ENCODE measurements at regions of chr7 and their contacts with region 1.

Region 1: DNA sequence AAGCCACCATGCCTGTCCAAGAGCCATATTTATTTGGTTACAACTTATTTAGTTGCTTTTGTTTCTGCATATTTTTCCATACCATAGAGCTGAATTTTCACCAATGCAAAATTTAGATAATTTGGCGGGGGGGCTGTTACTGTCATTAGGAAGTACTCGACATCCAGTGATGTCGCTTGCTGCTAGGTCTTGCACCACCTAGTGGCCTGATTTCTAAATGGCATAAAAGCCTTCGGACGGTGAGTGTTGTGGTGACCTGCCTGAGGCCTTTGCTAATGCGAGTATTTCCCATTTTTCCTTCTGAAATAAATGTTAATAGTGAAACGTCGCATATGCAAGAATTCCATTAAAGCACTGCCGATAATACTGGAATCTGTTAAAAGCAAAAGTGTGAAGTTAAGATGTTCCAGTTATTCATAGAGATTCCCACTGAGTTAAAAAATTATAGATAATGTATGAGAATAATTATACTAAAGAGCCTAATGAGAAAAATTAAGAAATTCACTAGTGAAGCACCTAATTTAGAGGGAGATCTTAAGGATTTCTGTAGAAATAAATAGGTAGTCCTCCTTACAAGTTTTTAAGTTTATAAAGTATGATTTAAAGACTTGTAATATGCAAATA is 86.1 kb upstream of the DNAJB6 start:
- DNase-seq: peak; percentile 40 to 55 (median 43)
- H3K4me3 ChIP-seq: no peak overlapping the region
- H3K4me3 Mint-ChIP-seq: no peak overlapping the region
- H3K27ac ChIP-seq: no peak overlapping the region
- H3K27ac Mint-ChIP-seq: peak overlapping the region in 4 of 7 donors; percentile 37 to 63 (median 56)
- H3K4me1 ChIP-seq: no peaks in the 10 kb centered on the region
- H3K4me1 Mint-ChIP-seq: peaks cover 0 to 3% (median 1%) of the 10 kb centered on the region in 4 donors
- H3K27me3 ChIP-seq: no peaks in the 10 kb centered on the region
- H3K27me3 Mint-ChIP-seq: no peaks in the 10 kb centered on the region

Region 2: GRCh38 chr7:156949541-156950380 is 301.0 kb before region 1 on chr7 and contains the start of gene NOM1:
- CTCF ChIA-PET with region 1: interaction called, 3 read pairs
- POLR2A ChIA-PET with region 1: no interaction called
- intact Hi-C with region 1: loop called (anchors 2 kb)
- DNase-seq: peak; percentile 85 to 91 (median 89)
- H3K4me3 ChIP-seq: peak within 1 kb of the TSS; percentile 85 to 94
- H3K4me3 Mint-ChIP-seq: peak within 1 kb of the TSS; percentile 94 to 97 (median 96)
- H3K27ac ChIP-seq: peak within 1 kb of the TSS; percentile 62
- H3K27ac Mint-ChIP-seq: peak within 1 kb of the TSS; percentile 82 to 97 (median 88)
- H3K4me1 ChIP-seq: peaks cover 32% of the 10 kb centered on the region
- H3K4me1 Mint-ChIP-seq: peaks cover 17 to 28% (median 25%) of the 10 kb centered on the region in 4 donors
- H3K27me3 ChIP-seq: no peaks in the 10 kb centered on the region
- H3K27me3 Mint-ChIP-seq: peaks cover 4 to 11% of the 10 kb centered on the region in 2 donors
- total RNA-seq, gene NOM1: 31.4 to 32.5 TPM

Region 3: DNA sequence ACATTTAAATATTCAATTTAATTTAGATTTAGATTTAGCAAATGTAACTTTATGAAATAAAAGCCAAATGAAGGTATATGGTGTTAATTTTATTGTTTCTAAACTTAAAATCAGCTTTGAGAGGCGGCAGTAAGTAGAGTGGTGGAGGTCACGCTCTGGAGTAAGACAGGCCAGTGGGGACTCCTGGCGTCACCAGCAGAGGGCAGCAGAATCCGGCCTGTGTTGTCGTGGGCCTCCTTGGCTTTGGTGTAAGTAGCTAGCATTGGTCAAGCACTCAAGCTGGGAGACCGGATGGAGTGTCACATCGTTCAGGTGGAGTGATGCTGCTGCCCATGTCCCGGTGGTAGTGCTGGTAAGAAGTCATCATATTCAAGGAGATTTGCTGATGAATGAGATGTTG is 12.6 kb before region 1 on chr7:
- CTCF ChIA-PET with region 1: interaction called, 23 read pairs
- POLR2A ChIA-PET with region 1: no interaction called
- intact Hi-C with region 1: no loop called
- DNase-seq: no peak
- H3K4me3 ChIP-seq: no peak overlapping the region
- H3K4me3 Mint-ChIP-seq: no peak overlapping the region
- H3K27ac ChIP-seq: no peak overlapping the region
- H3K27ac Mint-ChIP-seq: peak overlapping the region in 3 of 7 donors; percentile 35 to 74 (median 48)
- H3K4me1 ChIP-seq: no peaks in the 10 kb centered on the region
- H3K4me1 Mint-ChIP-seq: peaks cover 0 to 5% (median 4%) of the 10 kb centered on the region in 4 donors
- H3K27me3 ChIP-seq: no peaks in the 10 kb centered on the region
- H3K27me3 Mint-ChIP-seq: no peaks in the 10 kb centered on the region

Region 4: DNA sequence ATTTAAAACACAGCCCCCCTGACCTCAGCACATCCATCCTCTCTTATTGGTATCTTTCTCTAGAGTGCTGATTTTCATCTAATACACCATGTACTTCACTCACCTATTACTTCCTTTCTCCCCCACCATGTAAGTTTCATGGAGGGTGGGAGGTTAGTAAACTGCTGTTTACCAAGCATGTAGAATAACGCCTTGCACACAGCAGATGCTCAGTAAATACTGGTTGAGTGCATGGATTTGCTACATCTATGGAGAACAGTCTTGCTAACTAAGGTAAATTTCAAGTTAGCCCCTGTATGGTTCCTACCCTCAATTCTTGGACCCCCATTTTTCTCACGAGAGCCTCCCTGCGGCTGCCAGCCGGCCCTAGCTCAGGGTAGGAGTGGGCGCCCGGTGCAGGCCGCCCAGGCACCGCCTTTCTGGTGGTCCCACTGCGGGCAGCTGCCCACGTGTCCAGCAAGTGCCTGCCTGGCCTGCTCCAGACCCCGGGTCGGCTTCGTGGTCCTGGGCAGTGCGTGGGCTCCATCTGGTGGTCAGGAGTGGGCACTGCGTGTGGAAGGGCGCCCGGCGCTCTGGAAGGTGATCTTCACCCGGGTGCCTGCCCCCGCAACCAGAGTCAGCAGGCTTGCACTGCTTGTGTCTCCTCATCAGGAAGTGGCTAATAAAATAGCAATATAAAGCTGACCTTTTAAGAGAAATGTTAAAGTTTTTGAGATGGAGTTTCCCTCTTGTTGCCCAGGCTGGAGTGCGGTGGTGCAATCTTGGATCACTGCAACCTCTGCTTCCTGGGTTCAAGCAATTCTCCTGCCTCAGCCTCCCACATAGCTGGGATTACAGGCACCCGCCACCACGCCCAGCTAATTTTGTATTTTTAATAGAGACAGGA is 22.7 kb after region 1 on chr7:
- CTCF ChIA-PET with region 1: interaction called, 12 read pairs
- POLR2A ChIA-PET with region 1: no interaction called
- intact Hi-C with region 1: no loop called
- DNase-seq: peak; percentile 43 to 63 (median 51)
- H3K4me3 ChIP-seq: no peak overlapping the region
- H3K4me3 Mint-ChIP-seq: peak overlapping the region in 2 of 8 donors; percentile 2 to 23
- H3K27ac ChIP-seq: no peak overlapping the region
- H3K27ac Mint-ChIP-seq: peak overlapping the region in 6 of 7 donors; percentile 37 to 85 (median 44)
- H3K4me1 ChIP-seq: peaks cover 37% of the 10 kb centered on the region
- H3K4me1 Mint-ChIP-seq: peaks cover 21 to 43% (median 31%) of the 10 kb centered on the region in 4 donors
- H3K27me3 ChIP-seq: no peaks in the 10 kb centered on the region
- H3K27me3 Mint-ChIP-seq: peaks cover 1 to 7% of the 10 kb centered on the region in 2 donors

Region 5: GRCh38 chr7:157292699-157293412 is 42.1 kb after region 1 on chr7:
- CTCF ChIA-PET with region 1: no interaction called
- POLR2A ChIA-PET with region 1: no interaction called
- intact Hi-C with region 1: no loop called
- DNase-seq: peak in 1 of 5 donors; percentile 33
- H3K4me3 ChIP-seq: no peak overlapping the region
- H3K4me3 Mint-ChIP-seq: no peak overlapping the region
- H3K27ac ChIP-seq: no peak overlapping the region
- H3K27ac Mint-ChIP-seq: no peak overlapping the region
- H3K4me1 ChIP-seq: no peaks in the 10 kb centered on the region
- H3K4me1 Mint-ChIP-seq: peaks cover 0 to 2% (median 0%) of the 10 kb centered on the region in 4 donors
- H3K27me3 ChIP-seq: no peaks in the 10 kb centered on the region
- H3K27me3 Mint-ChIP-seq: peaks cover 0 to 1% of the 10 kb centered on the region in 2 donors